ENCODE measurements at regions of chr4 and their contacts with region 1.

Region 1: GRCh38 chr4:143558823-143559756 is 45.6 kb downstream of the SMARCA5 start:
- DNase-seq: peak; percentile 34 to 63
- ATAC-seq: peak; percentile 88 to 93
- H3K4me3 ChIP-seq: peak overlapping the region; percentile 45
- H3K27ac ChIP-seq: peak overlapping the region; percentile 28 to 78; a peak in 4 of 6 replicates
- H3K4me1 ChIP-seq: no peaks in the 10 kb centered on the region
- CTCF ChIP-seq: peak; percentile 72
- EP300 ChIP-seq: no peak
- POLR2A ChIP-seq: no peak
- RAD21 ChIP-seq: peak; percentile 65 to 66

Region 2: DNA sequence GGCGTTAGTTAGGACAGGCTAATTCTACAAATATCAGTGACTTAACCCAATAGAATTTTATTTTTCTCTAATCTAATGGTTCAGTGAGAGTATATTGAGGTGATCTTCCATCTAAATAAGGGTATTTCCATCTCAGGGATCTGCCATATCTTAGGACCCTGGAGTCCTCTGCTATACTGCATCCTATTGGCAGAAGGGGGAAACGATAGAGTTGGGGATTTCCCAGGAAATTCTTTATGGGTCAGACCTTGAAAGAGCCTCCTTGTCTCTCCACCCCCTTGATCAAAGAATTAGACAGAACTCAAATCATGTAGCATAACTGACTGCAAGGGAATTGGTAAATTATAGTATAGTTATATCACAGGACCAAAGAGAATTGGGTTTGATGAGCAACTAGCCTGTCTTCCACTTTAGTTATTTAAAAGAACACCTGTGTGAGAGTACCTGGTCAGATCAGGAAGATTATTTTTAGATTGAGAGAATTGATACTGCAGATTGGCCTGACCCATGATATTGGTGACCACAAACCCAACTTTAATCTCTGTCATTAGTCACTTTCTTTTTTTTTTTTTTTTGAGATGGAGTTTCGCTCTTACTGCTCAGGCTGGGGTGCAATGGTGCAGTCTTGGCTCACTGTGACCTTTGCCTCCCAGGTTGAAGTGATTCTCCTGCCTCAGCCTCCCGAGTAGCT is 20.0 kb before region 1 on chr4:
- CTCF ChIA-PET with region 1: interaction called, 11 read pairs
- POLR2A ChIA-PET with region 1: no interaction called
- DNase-seq: no peak
- ATAC-seq: no peak
- H3K4me3 ChIP-seq: no peak overlapping the region
- H3K27ac ChIP-seq: no peak overlapping the region
- H3K4me1 ChIP-seq: no peaks in the 10 kb centered on the region
- CTCF ChIP-seq: no peak
- EP300 ChIP-seq: no peak
- POLR2A ChIP-seq: no peak
- RAD21 ChIP-seq: no peak

Region 3: DNA sequence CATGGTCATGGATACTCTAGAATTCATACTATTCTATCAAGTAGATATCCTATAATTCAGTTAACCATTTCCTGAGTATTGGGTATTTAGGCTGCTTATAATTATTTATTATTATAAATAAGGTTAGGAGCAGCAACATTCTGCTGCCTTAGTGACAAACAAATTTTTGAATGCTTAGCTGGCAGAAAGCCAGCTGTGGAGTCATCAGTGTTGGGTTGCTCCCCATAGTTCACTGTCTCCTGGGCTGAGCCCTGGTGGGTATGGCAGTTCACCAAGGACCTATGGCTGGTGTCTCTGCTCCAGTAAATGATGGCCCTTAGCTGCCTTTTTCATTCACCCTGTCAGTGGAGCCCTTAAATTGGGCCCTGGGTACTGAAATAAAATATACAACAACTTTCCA is 16.2 kb after region 1 on chr4:
- CTCF ChIA-PET with region 1: interaction called, 10 read pairs
- POLR2A ChIA-PET with region 1: no interaction called
- DNase-seq: no peak
- ATAC-seq: no peak
- H3K4me3 ChIP-seq: no peak overlapping the region
- H3K27ac ChIP-seq: no peak overlapping the region
- H3K4me1 ChIP-seq: no peaks in the 10 kb centered on the region
- CTCF ChIP-seq: no peak
- EP300 ChIP-seq: no peak
- POLR2A ChIP-seq: no peak
- RAD21 ChIP-seq: no peak